ENCODE measurements at regions of chr15 and their contacts with region 1.

Region 1: GRCh38 chr15:64355944-64356709 is at the start of gene CSNK1G1:
- DNase-seq: peak; percentile 95 to 96
- ATAC-seq: peak; percentile 99 to 100 (median 100)
- H3K4me3 ChIP-seq: peak within 1 kb of the TSS; percentile 80
- H3K27ac ChIP-seq: peak within 1 kb of the TSS; percentile 56
- H3K4me1 ChIP-seq: peaks cover 12% of the 10 kb centered on the region
- H3K27me3 ChIP-seq: no peaks in the 10 kb centered on the region
- CTCF ChIP-seq: peak; percentile 19
- total RNA-seq, gene CSNK1G1: 7.1 to 9.6 (median 7.8) TPM

Region 2: GRCh38 chr15:64162870-64163658 is 193.1 kb before region 1 on chr15 and contains the start of gene PPIB:
- intact Hi-C with region 1: loop called (anchors 5 kb)
- DNase-seq: peak; percentile 99
- ATAC-seq: peak; percentile 95 to 96 (median 95)
- H3K4me3 ChIP-seq: peak within 1 kb of the TSS; percentile 95
- H3K27ac ChIP-seq: peak within 1 kb of the TSS; percentile 95
- H3K4me1 ChIP-seq: peaks cover 37% of the 10 kb centered on the region
- H3K27me3 ChIP-seq: no peaks in the 10 kb centered on the region
- CTCF ChIP-seq: peak; percentile 33
- total RNA-seq, gene PPIB: 40.8 to 61.1 (median 50.1) TPM

Region 3: GRCh38 chr15:64209680-64210334 is 146.3 kb before region 1 on chr15:
- intact Hi-C with region 1: loop called in 1 of 2 experiments (anchors 5 kb)
- DNase-seq: no peak
- ATAC-seq: no peak
- H3K4me3 ChIP-seq: no peak overlapping the region
- H3K27ac ChIP-seq: no peak overlapping the region
- H3K4me1 ChIP-seq: no peaks in the 10 kb centered on the region
- H3K27me3 ChIP-seq: no peaks in the 10 kb centered on the region
- CTCF ChIP-seq: peak; percentile 35